WTC11 (cell line): ENCODE measurements at regions of chr16 and their contacts with region 1.

Region 1: GRCh38 chr16:29805378-29806098 is 791 bp upstream of the MAZ start:
- DNase-seq: peak; percentile 97
- ATAC-seq: peak; percentile 78
- H3K4me3 Mint-ChIP-seq: peak overlapping the region; percentile 99
- H3K27ac Mint-ChIP-seq: peak overlapping the region; percentile 100
- H3K4me1 Mint-ChIP-seq: peaks cover 44% of the 10 kb centered on the region
- H3K27me3 Mint-ChIP-seq: no peaks in the 10 kb centered on the region
- CTCF ChIP-seq: no peak

Region 2: GRCh38 chr16:29678691-29679267 is 126.8 kb before region 1 on chr16 and contains the start of gene QPRT:
- CTCF ChIA-PET with region 1: no interaction called
- POLR2A ChIA-PET with region 1: interaction called, 10 read pairs
- DNase-seq: peak; percentile 90
- ATAC-seq: peak; percentile 85
- H3K4me3 Mint-ChIP-seq: peak within 1 kb of the TSS; percentile 91
- H3K27ac Mint-ChIP-seq: peak within 1 kb of the TSS; percentile 100
- H3K4me1 Mint-ChIP-seq: peaks cover 40% of the 10 kb centered on the region
- H3K27me3 Mint-ChIP-seq: no peaks in the 10 kb centered on the region
- CTCF ChIP-seq: no peak
- total RNA-seq, gene QPRT: 138 to 187 TPM (median 182 TPM) in 3 replicates

Region 3: GRCh38 chr16:29790183-29790952 is 15.2 kb before region 1 on chr16 and contains the start of gene KIF22:
- CTCF ChIA-PET with region 1: interaction called, 16 read pairs
- POLR2A ChIA-PET with region 1: interaction called, 6 read pairs
- DNase-seq: peak; percentile 100
- ATAC-seq: peak; percentile 96
- H3K4me3 Mint-ChIP-seq: peak within 1 kb of the TSS; percentile 98
- H3K27ac Mint-ChIP-seq: peak within 1 kb of the TSS; percentile 97
- H3K4me1 Mint-ChIP-seq: peaks cover 25% of the 10 kb centered on the region
- H3K27me3 Mint-ChIP-seq: peaks cover 19% of the 10 kb centered on the region
- CTCF ChIP-seq: no peak
- total RNA-seq, gene KIF22: 165 to 182 TPM (median 175 TPM) in 3 replicates

Region 4: DNA sequence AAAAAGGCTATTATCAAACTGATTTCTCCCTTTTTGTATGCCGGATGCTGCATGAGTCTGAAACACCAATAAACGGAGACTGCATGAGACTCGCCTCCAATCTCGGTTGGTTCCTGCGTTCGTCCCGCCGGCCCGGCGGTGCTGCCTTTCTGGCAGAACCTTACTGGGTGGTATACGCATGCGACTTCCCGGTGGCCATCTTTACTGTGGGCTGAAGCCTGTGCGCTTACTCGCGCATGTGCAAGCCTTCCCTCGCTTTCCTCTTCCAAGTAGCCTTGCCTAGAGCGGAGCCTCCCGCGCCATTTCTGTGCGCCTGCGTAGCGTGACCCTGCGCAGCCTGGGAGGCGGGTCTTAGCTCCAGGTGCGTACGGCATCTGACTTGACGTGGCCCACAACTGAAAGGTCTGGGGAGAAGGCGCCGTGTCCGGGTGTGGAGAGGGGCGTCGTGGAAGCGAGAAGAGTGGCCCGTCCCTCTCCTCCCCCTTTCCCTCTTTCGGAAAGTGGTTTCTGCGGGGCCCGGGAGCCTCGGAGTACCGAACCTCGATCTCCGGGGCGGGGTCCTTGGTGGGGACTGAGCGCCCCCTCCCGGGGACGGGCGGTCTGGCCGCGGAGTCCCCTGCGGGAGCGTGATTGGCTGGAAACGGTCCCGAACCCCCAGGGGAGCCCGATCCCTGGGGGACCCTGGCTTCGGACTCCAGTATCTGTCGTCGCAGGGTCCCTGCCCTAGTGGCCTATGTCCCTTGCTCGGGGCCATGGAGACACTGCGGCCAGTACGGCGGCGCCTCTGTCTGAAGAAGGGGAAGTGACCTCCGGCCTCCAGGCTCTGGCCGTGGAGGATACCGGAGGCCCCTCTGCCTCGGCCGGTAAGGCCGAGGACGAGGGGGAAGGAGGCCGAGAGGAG is 10.5 kb after region 1 on chr16 and contains the start of gene PAGR1:
- CTCF ChIA-PET with region 1: interaction called, 33 read pairs
- POLR2A ChIA-PET with region 1: interaction called, 12 read pairs
- DNase-seq: peak; percentile 98
- ATAC-seq: peak; percentile 56
- H3K4me3 Mint-ChIP-seq: peak within 1 kb of the TSS; percentile 94
- H3K27ac Mint-ChIP-seq: peak within 1 kb of the TSS; percentile 100
- H3K4me1 Mint-ChIP-seq: peaks cover 56% of the 10 kb centered on the region
- H3K27me3 Mint-ChIP-seq: no peaks in the 10 kb centered on the region; the same call in 1 of the 2 replicates
- CTCF ChIP-seq: peak; percentile 81
- total RNA-seq, gene PAGR1: 60.1 to 69.0 TPM (median 66.8 TPM) in 3 replicates

Region 5: GRCh38 chr16:29877266-29877961 is 71.9 kb after region 1 on chr16:
- CTCF ChIA-PET with region 1: interaction called, 12 read pairs
- POLR2A ChIA-PET with region 1: no interaction called
- DNase-seq: peak; percentile 100
- ATAC-seq: peak; percentile 97
- H3K4me3 Mint-ChIP-seq: peak overlapping the region; percentile 87
- H3K27ac Mint-ChIP-seq: peak overlapping the region; percentile 98
- H3K4me1 Mint-ChIP-seq: peaks cover 10% of the 10 kb centered on the region
- H3K27me3 Mint-ChIP-seq: peaks cover 3% of the 10 kb centered on the region; the same call in 1 of the 2 replicates
- CTCF ChIP-seq: no peak